CD14-positive monocyte (primary cell): ENCODE measurements at regions of chr18 and their contacts with region 1.

Region 1: DNA sequence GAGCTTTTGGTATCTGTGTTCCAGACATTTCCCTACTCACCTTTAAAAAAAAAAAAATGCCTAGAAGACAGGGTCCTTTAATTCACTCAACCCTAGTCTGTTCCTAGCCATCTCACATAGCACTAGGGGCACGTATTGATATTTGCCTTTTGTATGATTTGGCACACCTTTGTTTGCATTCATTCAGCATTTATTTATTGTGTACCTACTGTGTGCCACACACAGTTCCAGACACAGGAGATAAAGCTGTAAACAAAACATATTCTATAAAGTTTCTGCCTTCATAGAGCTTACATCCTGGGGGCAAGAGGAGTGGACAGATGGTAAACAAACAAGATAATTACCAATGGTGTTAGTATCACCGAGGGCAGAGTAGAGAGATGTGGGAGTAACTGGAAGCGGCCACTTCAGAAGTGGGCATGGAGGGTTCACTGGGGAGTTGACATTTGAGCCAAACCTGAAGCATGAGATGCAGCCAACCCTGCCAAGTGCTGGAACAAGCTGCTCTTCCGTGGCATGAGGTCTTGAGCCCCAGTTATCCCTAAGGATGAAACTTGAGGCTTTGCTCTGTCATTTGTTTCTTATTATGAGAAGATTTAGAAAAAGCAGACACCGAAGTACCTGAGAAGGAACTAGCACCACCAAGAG is 18.2 kb downstream of the MAPRE2 start:
- DNase-seq: no peak
- H3K4me3 ChIP-seq: no peak overlapping the region
- H3K4me3 Mint-ChIP-seq: no peak overlapping the region
- H3K27ac ChIP-seq: no peak overlapping the region
- H3K27ac Mint-ChIP-seq: no peak overlapping the region
- H3K4me1 ChIP-seq: no peaks in the 10 kb centered on the region
- H3K4me1 Mint-ChIP-seq: peaks cover 2% of the 10 kb centered on the region
- H3K27me3 ChIP-seq: no peaks in the 10 kb centered on the region
- H3K27me3 Mint-ChIP-seq: peaks cover 0 to 2% (median 0%) of the 10 kb centered on the region in 3 donors
- CTCF ChIP-seq: no peak

Region 2: GRCh38 chr18:35019933-35020332 is 39.5 kb before region 1 on chr18:
- intact Hi-C with region 1: loop called in 1 of 2 experiments (anchors 5 kb)
- DNase-seq: no peak
- H3K4me3 ChIP-seq: no peak overlapping the region
- H3K4me3 Mint-ChIP-seq: no peak overlapping the region
- H3K27ac ChIP-seq: no peak overlapping the region
- H3K27ac Mint-ChIP-seq: no peak overlapping the region
- H3K4me1 ChIP-seq: no peaks in the 10 kb centered on the region
- H3K4me1 Mint-ChIP-seq: no peaks in the 10 kb centered on the region
- H3K27me3 ChIP-seq: no peaks in the 10 kb centered on the region
- H3K27me3 Mint-ChIP-seq: peaks cover 0 to 1% (median 0%) of the 10 kb centered on the region in 3 donors
- CTCF ChIP-seq: no peak